Activated T-helper 1 cell treated with anti-CD3 and anti-CD28 coated beads, Interleukin-12 subunit alpha, Interleukin-12 subunit beta, Interleukin-2, Interleukin-4 antibody, amounts not matched to agents 30 ng/mL and 10 ng/mL and 1 ng/mL, durations not matched to agents 14 hours and 24 hours and 36 hours (primary cell): ENCODE measurements at regions of chr10 and their contacts with region 1.

Region 1: DNA sequence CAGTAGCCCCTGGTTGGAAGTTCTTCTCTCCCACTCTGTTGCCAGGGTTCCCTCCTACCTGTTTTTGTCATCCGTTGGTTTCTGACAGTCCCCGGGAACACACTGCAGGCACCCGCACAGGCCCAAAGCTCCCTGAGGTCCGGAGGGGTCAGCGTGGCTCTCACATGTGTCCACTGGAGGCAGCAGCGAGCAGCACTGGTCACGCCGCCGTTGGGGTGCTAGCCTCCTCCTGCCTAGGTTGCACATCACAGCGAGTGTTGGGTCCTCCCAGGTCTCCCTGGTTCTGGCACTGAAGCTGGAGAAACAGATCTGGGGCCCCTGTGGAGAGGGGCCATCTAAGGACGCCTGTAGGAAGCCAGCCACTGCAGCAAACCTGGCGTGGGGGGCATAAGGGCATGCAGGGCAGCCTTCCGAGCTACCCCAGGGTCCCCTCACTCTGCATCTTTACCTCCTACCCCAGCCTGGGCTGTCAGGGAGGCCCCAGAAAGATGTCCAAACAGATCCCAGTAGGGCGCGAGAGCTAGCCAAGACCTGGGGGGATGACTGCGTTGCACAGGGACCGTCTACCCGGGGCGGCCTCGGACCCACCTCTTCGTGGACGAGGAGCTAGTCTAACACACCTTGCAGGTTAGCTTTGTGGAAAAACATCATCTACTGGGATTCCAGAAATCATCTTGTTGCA is 28.9 kb downstream of the LRRC27 start:
- DNase-seq: no peak
- H3K4me3 Mint-ChIP-seq: no peak overlapping the region
- H3K27ac Mint-ChIP-seq: no peak overlapping the region
- H3K4me1 Mint-ChIP-seq: peaks cover 8% of the 10 kb centered on the region
- H3K27me3 Mint-ChIP-seq: no peaks in the 10 kb centered on the region

Region 2: GRCh38 chr10:132281915-132282666 is 78.8 kb before region 1 on chr10:
- intact Hi-C with region 1: no loop called
- DNase-seq: no peak
- H3K4me3 Mint-ChIP-seq: no peak overlapping the region
- H3K27ac Mint-ChIP-seq: no peak overlapping the region
- H3K4me1 Mint-ChIP-seq: no peaks in the 10 kb centered on the region
- H3K27me3 Mint-ChIP-seq: peaks cover 3% of the 10 kb centered on the region

Region 3: GRCh38 chr10:132387764-132388210 is 26.9 kb after region 1 on chr10:
- intact Hi-C with region 1: loop called (anchors 2 kb)
- DNase-seq: peak; percentile 63
- H3K4me3 Mint-ChIP-seq: peak overlapping the region; percentile 47
- H3K27ac Mint-ChIP-seq: peak overlapping the region; percentile 92
- H3K4me1 Mint-ChIP-seq: peaks cover 1% of the 10 kb centered on the region
- H3K27me3 Mint-ChIP-seq: peaks cover 7% of the 10 kb centered on the region